Activated T-helper 2 cell treated with anti-CD3 and anti-CD28 coated beads, Interferon-gamma antibody, Interleukin-2, Interleukin-4, amounts not matched to agents 10 μg/mL and 5 μg/mL and 100 μg/mL, durations not matched to agents 14 hours and 24 hours and 36 hours (primary cell): ENCODE measurements at regions of chr12 and their contacts with region 1.

Region 1: DNA sequence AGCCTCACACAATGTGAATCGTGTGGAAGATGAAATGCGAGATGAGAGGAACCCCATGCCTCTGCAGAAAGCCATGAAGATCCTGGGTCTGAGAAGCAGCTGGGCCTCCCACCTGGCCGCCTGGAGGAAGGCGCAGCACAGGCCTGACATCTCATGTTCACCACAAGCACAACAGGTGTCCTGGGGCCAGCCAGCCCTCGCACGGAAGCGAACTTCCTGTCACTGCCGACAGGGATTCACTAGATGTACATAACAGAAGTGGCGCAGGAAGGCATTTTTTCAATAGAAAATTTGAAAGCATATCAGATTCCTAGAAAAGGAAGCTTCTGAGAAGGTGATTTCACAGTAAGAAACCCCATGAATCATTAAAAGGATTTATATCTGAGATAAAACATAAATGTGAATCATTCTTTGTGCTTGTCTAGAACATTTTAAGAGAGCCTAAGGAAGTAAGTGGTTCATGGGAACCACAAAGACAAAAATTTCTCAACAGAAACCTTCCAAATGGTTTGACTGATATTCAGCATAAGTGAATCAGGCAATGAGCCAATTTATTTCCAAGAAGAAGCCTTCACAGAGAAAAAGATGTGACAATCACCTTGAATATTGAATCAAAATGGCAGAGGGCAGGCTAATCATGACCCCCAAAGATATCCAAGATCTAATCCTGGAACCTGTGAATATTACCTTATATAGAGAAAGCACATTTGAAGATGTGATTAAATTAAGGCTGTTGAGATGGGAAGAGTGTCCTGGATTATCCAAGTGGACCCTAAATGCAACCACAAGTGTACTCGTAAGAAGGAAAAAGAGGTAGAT is 311.9 kb downstream of the DUSP6 start:
- DNase-seq: peak; percentile 83
- H3K4me3 Mint-ChIP-seq: peak overlapping the region; percentile 50
- H3K27ac Mint-ChIP-seq: peak overlapping the region; percentile 94
- H3K4me1 Mint-ChIP-seq: peaks cover 67% of the 10 kb centered on the region
- H3K27me3 Mint-ChIP-seq: no peaks in the 10 kb centered on the region

Region 2: DNA sequence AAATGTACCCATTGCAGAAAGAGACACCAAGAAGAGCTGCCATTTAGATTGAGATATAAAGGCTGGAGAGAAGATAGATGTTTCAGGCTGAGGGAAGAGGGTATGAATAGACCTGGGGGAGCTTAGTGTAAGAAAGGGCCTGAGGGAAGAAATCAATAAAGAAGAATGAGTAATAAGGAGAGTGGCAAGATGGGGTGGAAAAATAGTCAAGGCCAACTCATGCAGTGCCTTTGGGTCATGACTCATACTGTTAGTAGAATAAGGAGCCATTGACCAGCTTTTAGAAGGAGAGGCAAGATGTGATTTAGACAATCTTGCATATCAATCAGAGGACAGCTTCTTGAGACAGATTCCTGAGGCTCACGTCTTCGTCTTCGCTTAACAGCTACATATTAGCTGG is 24.4 kb after region 1 on chr12:
- intact Hi-C with region 1: loop called (anchors 2 kb)
- DNase-seq: no peak
- H3K4me3 Mint-ChIP-seq: no peak overlapping the region
- H3K27ac Mint-ChIP-seq: no peak overlapping the region
- H3K4me1 Mint-ChIP-seq: peaks cover 36% of the 10 kb centered on the region
- H3K27me3 Mint-ChIP-seq: no peaks in the 10 kb centered on the region

Region 3: DNA sequence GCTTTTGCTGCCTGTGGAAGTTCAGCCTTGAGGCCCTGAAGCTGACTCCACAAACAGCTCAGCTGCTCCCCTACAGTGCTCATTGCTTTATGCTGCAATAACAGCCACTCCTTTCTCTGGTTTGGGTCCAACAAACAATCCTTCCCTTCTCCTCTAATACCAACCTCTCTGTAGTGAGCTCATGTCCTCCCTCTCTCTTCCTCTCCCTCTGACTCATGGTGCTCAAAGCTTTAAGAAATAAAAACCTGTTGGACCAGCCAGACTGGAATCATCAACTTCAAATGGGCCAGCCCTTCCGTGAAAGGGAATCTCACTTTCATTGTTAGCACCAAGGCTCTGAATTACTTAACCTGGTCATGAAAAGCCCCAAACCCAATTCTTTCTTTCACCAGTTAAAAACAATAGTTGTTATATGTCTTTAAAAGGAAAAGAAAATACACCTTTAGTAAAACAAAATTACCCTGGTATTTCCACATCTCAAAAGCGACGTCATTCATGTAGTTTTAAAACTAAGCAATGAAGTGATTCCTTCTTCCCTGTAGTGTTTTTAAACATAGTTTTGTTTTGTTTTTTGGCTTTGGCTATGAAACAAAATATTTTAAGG is 185.6 kb after region 1 on chr12:
- intact Hi-C with region 1: loop called (anchors 1 kb)
- DNase-seq: no peak
- H3K4me3 Mint-ChIP-seq: peak overlapping the region; percentile 70
- H3K27ac Mint-ChIP-seq: peak overlapping the region; percentile 100
- H3K4me1 Mint-ChIP-seq: peaks cover 67% of the 10 kb centered on the region
- H3K27me3 Mint-ChIP-seq: no peaks in the 10 kb centered on the region

Region 4: DNA sequence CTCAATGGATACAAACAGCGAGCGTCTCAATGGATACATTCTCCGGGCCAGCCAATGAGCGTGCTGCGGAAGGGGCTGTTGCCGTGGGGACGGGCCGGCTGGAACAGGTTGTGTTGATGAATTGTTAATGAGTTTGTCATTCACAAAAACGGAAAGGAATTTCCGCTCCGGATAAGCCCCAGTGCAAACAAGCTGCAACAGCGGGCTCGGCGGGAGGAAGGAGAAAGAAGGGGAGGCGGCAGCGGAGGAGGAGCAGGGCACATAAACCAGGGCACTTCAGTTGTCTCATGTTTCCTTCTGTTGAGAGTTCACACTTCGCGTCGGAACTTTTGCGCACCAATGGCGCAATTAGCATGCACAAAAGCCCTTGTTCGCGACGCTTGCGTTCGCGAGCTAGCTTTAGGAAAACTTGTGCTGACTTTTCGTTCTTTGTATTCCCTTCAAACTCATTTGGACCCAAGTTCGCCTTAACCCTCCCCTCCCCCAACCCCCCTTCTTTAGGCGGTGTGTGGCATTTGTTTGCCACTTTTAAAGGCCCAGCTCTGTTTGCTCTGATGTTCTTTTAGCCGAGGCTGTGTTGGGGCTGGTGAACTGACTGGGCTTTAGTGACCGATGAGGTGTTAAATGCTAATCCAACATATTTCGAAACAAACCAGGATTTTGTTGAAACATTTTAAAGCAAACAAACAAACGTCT is 312.3 kb after region 1 on chr12 and contains the start of gene DUSP6:
- intact Hi-C with region 1: loop called (anchors 1 kb)
- DNase-seq: peak; percentile 96
- H3K4me3 Mint-ChIP-seq: peak within 1 kb of the TSS; percentile 97
- H3K27ac Mint-ChIP-seq: peak within 1 kb of the TSS; percentile 97
- H3K4me1 Mint-ChIP-seq: peaks cover 38% of the 10 kb centered on the region
- H3K27me3 Mint-ChIP-seq: no peaks in the 10 kb centered on the region
- total RNA-seq, gene DUSP6: 75.7 and 82.0 TPM in 2 replicates

Region 5: DNA sequence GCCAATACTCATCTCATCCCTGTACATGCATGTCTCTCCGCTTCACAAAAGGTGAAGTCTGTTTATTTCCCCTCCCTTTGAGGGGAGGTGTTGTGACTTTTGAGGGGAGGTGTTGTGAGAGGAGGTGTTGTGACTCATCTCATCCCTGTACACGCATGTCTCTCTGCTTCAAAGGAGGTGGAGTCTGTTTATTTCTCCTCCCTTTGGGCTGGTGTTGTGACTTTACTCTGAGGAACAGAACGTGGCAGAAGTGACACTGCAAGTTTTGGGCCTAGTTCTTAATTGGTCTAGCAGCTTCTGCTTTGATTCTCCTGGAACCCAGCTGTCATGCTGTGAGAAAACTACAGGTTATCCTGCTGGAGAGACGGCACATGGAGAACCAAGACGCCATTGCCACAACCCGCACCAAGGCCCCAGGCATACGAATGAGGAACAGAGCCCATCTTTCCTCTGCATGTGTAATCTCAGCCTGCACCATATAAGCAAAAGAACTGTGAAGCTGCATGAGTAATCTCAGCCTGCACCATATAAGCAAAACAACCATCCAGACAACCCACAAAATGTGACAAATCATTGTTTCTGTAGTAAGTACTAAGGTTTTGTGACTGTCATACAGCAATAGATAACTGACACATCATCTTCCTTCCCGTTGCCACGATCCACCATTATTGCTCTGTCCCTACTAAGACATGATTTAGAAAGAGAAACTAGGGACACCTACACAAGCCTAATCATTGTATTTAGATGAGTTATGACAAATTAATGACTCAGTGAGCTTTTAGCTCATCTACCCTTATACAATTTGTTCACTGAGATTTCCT is 454.3 kb after region 1 on chr12:
- intact Hi-C with region 1: loop called (anchors 1 kb)
- DNase-seq: no peak
- H3K4me3 Mint-ChIP-seq: peak overlapping the region; percentile 9
- H3K27ac Mint-ChIP-seq: peak overlapping the region; percentile 90
- H3K4me1 Mint-ChIP-seq: peaks cover 17% of the 10 kb centered on the region
- H3K27me3 Mint-ChIP-seq: no peaks in the 10 kb centered on the region

Region 6: DNA sequence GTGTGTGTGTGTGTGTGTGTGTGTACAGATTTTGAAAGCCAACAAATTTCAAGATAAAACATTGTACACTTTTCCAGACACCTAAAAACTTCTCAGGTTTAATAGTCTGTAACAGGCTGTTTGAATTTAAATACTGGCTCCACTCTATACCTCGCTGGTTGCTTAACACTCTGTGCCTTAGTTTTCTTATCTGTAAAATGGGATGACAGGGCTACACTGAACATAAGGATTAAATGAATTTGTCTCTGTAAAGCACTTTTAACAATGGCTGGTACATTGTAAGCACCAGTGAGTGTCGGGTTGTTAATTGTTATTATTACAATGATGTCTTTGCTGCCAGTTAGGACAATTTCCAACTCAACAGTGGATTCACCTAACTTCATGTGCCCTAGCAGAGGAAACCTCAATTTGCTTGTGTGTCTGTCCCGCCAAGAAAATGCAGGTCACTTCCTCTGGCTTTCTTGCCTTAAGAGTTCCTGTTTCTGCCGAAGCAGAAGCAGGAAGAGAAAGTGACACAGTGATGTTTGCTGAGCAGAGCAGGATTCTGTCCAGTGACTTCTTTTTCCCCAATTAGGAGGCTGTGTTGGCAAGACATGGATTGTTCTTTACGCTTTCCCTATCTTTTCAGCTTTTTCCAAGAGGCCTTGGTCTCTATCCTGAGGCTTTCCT is 822.3 kb after region 1 on chr12:
- intact Hi-C with region 1: loop called (anchors 2 kb)
- DNase-seq: peak; percentile 38
- H3K4me3 Mint-ChIP-seq: peak overlapping the region; percentile 74
- H3K27ac Mint-ChIP-seq: peak overlapping the region; percentile 95
- H3K4me1 Mint-ChIP-seq: peaks cover 44% of the 10 kb centered on the region
- H3K27me3 Mint-ChIP-seq: no peaks in the 10 kb centered on the region